ENCODE measurements at regions of chr14 and their contacts with region 1.

Region 1: GRCh38 chr14:74881431-74882361 is at the start of gene DLST:
- DNase-seq: peak; percentile 69 to 89 (median 84)
- ATAC-seq: peak; percentile 78 to 81
- H3K4me3 Mint-ChIP-seq: peak within 1 kb of the TSS; percentile 96 to 100 (median 99)
- H3K27ac Mint-ChIP-seq: peak within 1 kb of the TSS; percentile 93 to 100 (median 99)
- H3K4me1 Mint-ChIP-seq: peaks cover 46 to 79% (median 66%) of the 10 kb centered on the region in 4 donors
- H3K27me3 Mint-ChIP-seq: no peaks in the 10 kb centered on the region
- polyA plus RNA-seq, gene DLST: 8.8 to 9.3 (median 8.9) TPM

Region 2: DNA sequence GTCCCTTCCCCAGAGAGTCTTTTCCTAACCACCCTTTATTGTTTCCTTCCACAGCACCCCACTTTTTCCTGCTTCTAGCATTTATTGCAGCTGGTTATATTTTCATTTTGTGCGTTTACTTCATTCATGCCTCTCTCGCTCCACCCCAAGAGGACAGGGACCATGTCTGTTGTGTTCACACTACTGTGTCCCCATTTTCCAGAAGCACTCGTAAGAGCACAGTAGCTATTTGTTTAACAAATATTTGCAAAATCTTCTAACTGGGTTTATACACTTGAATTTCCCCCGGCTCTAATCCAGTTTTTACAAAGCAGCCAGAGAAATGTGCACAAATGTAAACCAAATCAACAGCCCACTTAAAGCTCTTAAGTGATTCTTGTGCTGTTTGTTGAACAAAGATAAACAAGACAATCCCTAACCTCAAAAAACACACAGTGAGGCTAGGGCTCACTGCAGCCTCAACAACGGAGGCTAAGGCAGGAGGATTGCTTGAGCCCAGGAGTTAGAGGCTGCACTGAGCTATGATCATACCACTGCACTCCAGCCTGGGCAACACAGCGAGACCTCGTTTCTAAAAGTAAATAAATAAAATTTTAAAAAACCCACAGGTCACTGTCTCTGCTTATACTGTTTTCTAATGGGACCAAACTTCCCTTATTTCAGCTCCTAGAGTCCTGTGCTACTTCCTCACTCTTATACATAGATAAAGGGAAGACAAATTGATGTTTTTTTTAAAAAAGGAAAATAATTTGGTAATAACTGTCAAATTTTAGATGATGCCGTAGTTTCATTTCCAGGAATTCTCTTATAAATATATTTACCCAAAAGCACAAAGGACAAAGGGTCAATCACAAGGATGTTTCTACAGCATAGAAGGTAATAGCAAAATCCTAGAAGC is 572.3 kb before region 1 on chr14:
- POLR2A ChIA-PET with region 1: no interaction called
- DNase-seq: no peak
- ATAC-seq: no peak
- H3K4me3 Mint-ChIP-seq: no peak overlapping the region
- H3K27ac Mint-ChIP-seq: peak overlapping the region in 1 of 10 donors; percentile 17
- H3K4me1 Mint-ChIP-seq: peaks cover 0 to 2% (median 0%) of the 10 kb centered on the region in 4 donors
- H3K27me3 Mint-ChIP-seq: no peaks in the 10 kb centered on the region

Region 3: GRCh38 chr14:74867673-74868072 is 14.0 kb before region 1 on chr14:
- POLR2A ChIA-PET with region 1: interaction called, 60 read pairs
- DNase-seq: peak; percentile 26 to 79 (median 32)
- ATAC-seq: peak; percentile 94 to 97
- H3K4me3 Mint-ChIP-seq: peak overlapping the region; percentile 8 to 80 (median 54)
- H3K27ac Mint-ChIP-seq: peak overlapping the region; percentile 59 to 94 (median 88)
- H3K4me1 Mint-ChIP-seq: peaks cover 18 to 39% (median 28%) of the 10 kb centered on the region in 4 donors
- H3K27me3 Mint-ChIP-seq: no peaks in the 10 kb centered on the region

Region 4: GRCh38 chr14:74893614-74894091 is 12.0 kb after region 1 on chr14:
- POLR2A ChIA-PET with region 1: interaction called, 20 read pairs
- DNase-seq: no peak
- ATAC-seq: no peak
- H3K4me3 Mint-ChIP-seq: peak overlapping the region in 1 of 10 donors; percentile 45
- H3K27ac Mint-ChIP-seq: peak overlapping the region in 7 of 10 donors; percentile 1 to 84 (median 11)
- H3K4me1 Mint-ChIP-seq: peaks cover 4 to 25% (median 6%) of the 10 kb centered on the region in 4 donors
- H3K27me3 Mint-ChIP-seq: no peaks in the 10 kb centered on the region

Measured in naive thymus-derived CD8-positive, alpha-beta T cell (primary cell).